GM12878 (cell line): ENCODE measurements at regions of chr2 and their contacts with region 1.

Region 1: GRCh38 chr2:197191177-197191939 is 119.2 kb downstream of the ANKRD44 start:
- DNase-seq: no peak
- ATAC-seq: peak; percentile 81
- H3K4me3 ChIP-seq: no peak overlapping the region
- H3K27ac ChIP-seq: peak overlapping the region; percentile 17; the same call in 1 of the 2 replicates
- H3K4me1 ChIP-seq: peaks cover 16% of the 10 kb centered on the region; the same call in 1 of the 2 replicates
- H3K27me3 ChIP-seq: no peaks in the 10 kb centered on the region
- CTCF ChIP-seq: peak; percentile 57 to 69 (median 61)
- EP300 ChIP-seq: no peak
- POLR2A ChIP-seq: no peak
- RAD21 ChIP-seq: peak; percentile 91

Region 2: GRCh38 chr2:196566961-196567666 is 624.2 kb before region 1 on chr2:
- CTCF ChIA-PET with region 1: no interaction called
- POLR2A ChIA-PET with region 1: no interaction called
- RAD21 ChIA-PET with region 1: no interaction called
- SMC1A ChIA-PET with region 1: no interaction called
- in situ Hi-C with region 1: no loop called
- intact Hi-C with region 1: no loop called
- DNase-seq: no peak
- ATAC-seq: no peak
- H3K4me3 ChIP-seq: no peak overlapping the region
- H3K27ac ChIP-seq: no peak overlapping the region
- H3K4me1 ChIP-seq: no peaks in the 10 kb centered on the region
- H3K27me3 ChIP-seq: no peaks in the 10 kb centered on the region
- CTCF ChIP-seq: no peak
- EP300 ChIP-seq: no peak
- POLR2A ChIP-seq: no peak
- RAD21 ChIP-seq: no peak

Region 3: DNA sequence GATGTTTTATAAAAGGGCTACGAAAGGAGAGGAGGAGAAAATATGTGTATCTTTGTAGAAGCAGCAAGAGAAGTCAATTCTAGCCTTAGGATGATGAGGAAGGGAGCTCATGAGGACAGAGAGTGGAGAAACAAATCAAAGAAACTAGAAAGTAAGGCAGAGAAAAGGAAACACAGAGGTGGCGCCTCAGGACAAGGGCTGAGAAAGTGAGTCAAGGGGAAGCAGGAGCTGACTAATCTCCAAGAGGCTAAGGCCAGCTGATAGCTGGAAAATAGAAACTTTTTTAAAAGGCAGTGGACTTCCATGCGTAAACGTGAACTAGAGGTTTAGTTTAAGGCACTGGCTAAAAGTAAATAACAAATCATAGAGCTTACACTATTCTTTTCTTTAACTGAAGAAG is 54.1 kb before region 1 on chr2:
- CTCF ChIA-PET with region 1: interaction called, 13 read pairs
- POLR2A ChIA-PET with region 1: interaction called, 4 read pairs
- RAD21 ChIA-PET with region 1: no interaction called
- SMC1A ChIA-PET with region 1: no interaction called
- in situ Hi-C with region 1: no loop called
- intact Hi-C with region 1: no loop called
- DNase-seq: no peak
- ATAC-seq: no peak
- H3K4me3 ChIP-seq: no peak overlapping the region
- H3K27ac ChIP-seq: no peak overlapping the region
- H3K4me1 ChIP-seq: peaks cover 32% of the 10 kb centered on the region
- H3K27me3 ChIP-seq: no peaks in the 10 kb centered on the region
- CTCF ChIP-seq: no peak
- EP300 ChIP-seq: no peak
- POLR2A ChIP-seq: no peak
- RAD21 ChIP-seq: no peak

Region 4: GRCh38 chr2:197174539-197175094 is 16.7 kb before region 1 on chr2:
- CTCF ChIA-PET with region 1: interaction called, 25 read pairs
- POLR2A ChIA-PET with region 1: no interaction called
- RAD21 ChIA-PET with region 1: interaction called, 4 read pairs
- SMC1A ChIA-PET with region 1: interaction called, 6 read pairs
- in situ Hi-C with region 1: no loop called
- intact Hi-C with region 1: no loop called
- DNase-seq: no peak
- ATAC-seq: no peak
- H3K4me3 ChIP-seq: no peak overlapping the region
- H3K27ac ChIP-seq: no peak overlapping the region
- H3K4me1 ChIP-seq: no peaks in the 10 kb centered on the region; the same call in 1 of the 2 replicates
- H3K27me3 ChIP-seq: no peaks in the 10 kb centered on the region
- CTCF ChIP-seq: no peak
- EP300 ChIP-seq: no peak
- POLR2A ChIP-seq: no peak
- RAD21 ChIP-seq: no peak

Region 5: GRCh38 chr2:197216361-197216979 is 25.1 kb after region 1 on chr2:
- CTCF ChIA-PET with region 1: interaction called, 18 read pairs
- POLR2A ChIA-PET with region 1: interaction called, 6 read pairs
- RAD21 ChIA-PET with region 1: interaction called, 127 read pairs
- SMC1A ChIA-PET with region 1: interaction called, 27 read pairs
- in situ Hi-C with region 1: no loop called
- intact Hi-C with region 1: no loop called
- DNase-seq: peak; percentile 80
- ATAC-seq: peak; percentile 73
- H3K4me3 ChIP-seq: peak overlapping the region; percentile 34
- H3K27ac ChIP-seq: peak overlapping the region; percentile 82
- H3K4me1 ChIP-seq: peaks cover 70% of the 10 kb centered on the region
- H3K27me3 ChIP-seq: no peaks in the 10 kb centered on the region
- CTCF ChIP-seq: no peak
- EP300 ChIP-seq: peak; percentile 46 to 74; a peak in 3 of 4 replicates
- POLR2A ChIP-seq: 0 out of 2 replicates have a peak, but pooled peaks have one; percentile 23
- RAD21 ChIP-seq: 0 out of 2 replicates have a peak, but pooled peaks have one; percentile 16

Region 6: GRCh38 chr2:197255543-197255942 is 64.2 kb after region 1 on chr2:
- CTCF ChIA-PET with region 1: interaction called, 22 read pairs
- POLR2A ChIA-PET with region 1: no interaction called
- RAD21 ChIA-PET with region 1: interaction called, 65 read pairs
- SMC1A ChIA-PET with region 1: interaction called, 61 read pairs
- in situ Hi-C with region 1: no loop called
- intact Hi-C with region 1: no loop called
- DNase-seq: peak; percentile 81
- ATAC-seq: peak; percentile 94
- H3K4me3 ChIP-seq: peak overlapping the region; percentile 59
- H3K27ac ChIP-seq: peak overlapping the region; percentile 97
- H3K4me1 ChIP-seq: peaks cover 31% of the 10 kb centered on the region
- H3K27me3 ChIP-seq: no peaks in the 10 kb centered on the region
- CTCF ChIP-seq: no peak
- EP300 ChIP-seq: peak; percentile 57 to 66; a peak in 3 of 4 replicates
- POLR2A ChIP-seq: peak; percentile 98
- RAD21 ChIP-seq: peak; percentile 20; the same call in 1 of the 2 replicates

Region 7: GRCh38 chr2:197378494-197379307 is 187.3 kb after region 1 on chr2:
- CTCF ChIA-PET with region 1: interaction called, 26 read pairs
- POLR2A ChIA-PET with region 1: no interaction called
- RAD21 ChIA-PET with region 1: interaction called, 10 read pairs
- SMC1A ChIA-PET with region 1: interaction called, 15 read pairs
- in situ Hi-C with region 1: loop called (anchors 5 kb)
- intact Hi-C with region 1: loop called (anchors 1 kb)
- DNase-seq: no peak
- ATAC-seq: peak; percentile 80
- H3K4me3 ChIP-seq: no peak overlapping the region
- H3K27ac ChIP-seq: no peak overlapping the region
- H3K4me1 ChIP-seq: peaks cover 12% of the 10 kb centered on the region
- H3K27me3 ChIP-seq: no peaks in the 10 kb centered on the region; a peak in 1 of 4 replicates
- CTCF ChIP-seq: peak; percentile 64 to 80 (median 80)
- EP300 ChIP-seq: no peak
- POLR2A ChIP-seq: no peak
- RAD21 ChIP-seq: peak; percentile 99

Region 8: DNA sequence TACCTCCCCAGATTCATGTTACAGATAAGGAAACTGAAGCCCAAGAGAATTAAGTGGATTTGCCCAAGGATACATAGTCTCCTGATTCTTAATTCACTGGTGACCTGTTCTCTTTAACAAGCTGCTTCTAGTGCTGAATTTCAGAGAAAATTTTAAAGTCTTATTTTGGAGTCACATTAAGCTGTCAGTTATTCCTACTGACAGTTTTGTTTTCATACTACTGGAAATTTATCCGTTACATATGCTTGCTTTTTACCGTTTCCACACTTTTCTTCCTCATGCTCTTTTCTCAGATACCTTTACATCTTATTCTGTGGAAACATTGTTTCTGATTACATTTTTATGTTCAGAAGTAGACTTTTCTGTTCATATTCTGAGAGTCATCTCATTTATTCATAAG is 325.8 kb after region 1 on chr2:
- CTCF ChIA-PET with region 1: no interaction called
- POLR2A ChIA-PET with region 1: no interaction called
- RAD21 ChIA-PET with region 1: no interaction called
- SMC1A ChIA-PET with region 1: no interaction called
- in situ Hi-C with region 1: no loop called
- intact Hi-C with region 1: no loop called
- DNase-seq: no peak
- ATAC-seq: no peak
- H3K4me3 ChIP-seq: peak overlapping the region; percentile 99
- H3K27ac ChIP-seq: peak overlapping the region; percentile 95; the same call in 1 of the 2 replicates
- H3K4me1 ChIP-seq: peaks cover 7% of the 10 kb centered on the region
- H3K27me3 ChIP-seq: no peaks in the 10 kb centered on the region
- CTCF ChIP-seq: no peak
- EP300 ChIP-seq: no peak
- POLR2A ChIP-seq: no peak
- RAD21 ChIP-seq: no peak